ENCODE measurements at regions of chr3 and their contacts with region 1.

Region 1: GRCh38 chr3:191388823-191389222 is 58.5 kb upstream of the UTS2B start:
- DNase-seq: no peak
- H3K4me3 ChIP-seq: no peak overlapping the region
- H3K27ac ChIP-seq: no peak overlapping the region
- H3K4me1 ChIP-seq: peaks cover 36% of the 10 kb centered on the region
- H3K27me3 ChIP-seq: no peaks in the 10 kb centered on the region
- CTCF ChIP-seq: peak; percentile 50

Region 2: GRCh38 chr3:191246628-191247027 is 142.2 kb before region 1 on chr3:
- intact Hi-C with region 1: loop called (anchors 5 kb)
- DNase-seq: no peak
- H3K4me3 ChIP-seq: no peak overlapping the region
- H3K27ac ChIP-seq: no peak overlapping the region
- H3K4me1 ChIP-seq: no peaks in the 10 kb centered on the region
- H3K27me3 ChIP-seq: no peaks in the 10 kb centered on the region
- CTCF ChIP-seq: no peak

Region 3: DNA sequence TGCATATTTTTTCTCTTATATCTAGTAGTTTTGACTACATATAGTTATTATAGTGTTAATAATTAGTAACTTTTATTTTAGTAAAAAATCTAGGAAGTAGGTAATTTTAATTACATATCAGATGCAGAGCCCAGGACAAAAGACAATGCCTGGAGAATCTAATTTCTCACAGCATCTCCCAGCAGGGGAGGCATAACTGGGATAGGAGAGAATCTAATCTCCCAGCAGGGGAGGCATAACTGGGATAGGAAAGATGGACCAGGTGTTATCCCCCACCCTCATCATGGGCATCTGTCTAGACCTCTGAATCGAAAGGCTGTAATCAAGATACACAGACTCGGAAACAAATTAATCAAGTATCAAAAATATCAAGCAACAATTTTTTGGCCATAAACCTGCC is 131.5 kb before region 1 on chr3:
- intact Hi-C with region 1: no loop called
- DNase-seq: no peak
- H3K4me3 ChIP-seq: no peak overlapping the region
- H3K27ac ChIP-seq: no peak overlapping the region
- H3K4me1 ChIP-seq: no peaks in the 10 kb centered on the region
- H3K27me3 ChIP-seq: no peaks in the 10 kb centered on the region
- CTCF ChIP-seq: no peak

Region 4: GRCh38 chr3:191301017-191301416 is 87.8 kb before region 1 on chr3:
- intact Hi-C with region 1: no loop called
- DNase-seq: no peak
- H3K4me3 ChIP-seq: no peak overlapping the region
- H3K27ac ChIP-seq: no peak overlapping the region
- H3K4me1 ChIP-seq: no peaks in the 10 kb centered on the region
- H3K27me3 ChIP-seq: no peaks in the 10 kb centered on the region
- CTCF ChIP-seq: no peak

Region 5: GRCh38 chr3:191329654-191330528 is 58.9 kb before region 1 on chr3 and contains the start of gene UTS2B:
- intact Hi-C with region 1: loop called (anchors 10 kb)
- DNase-seq: peak; percentile 43
- H3K4me3 ChIP-seq: peak within 1 kb of the TSS; percentile 94
- H3K27ac ChIP-seq: peak within 1 kb of the TSS; percentile 96
- H3K4me1 ChIP-seq: peaks cover 66% of the 10 kb centered on the region
- H3K27me3 ChIP-seq: no peaks in the 10 kb centered on the region
- CTCF ChIP-seq: no peak
- total RNA-seq, gene UTS2B: 0.47 TPM

Measured in left ventricle myocardium inferior (tissue), 1 donor.